PC-9 (cell line): ENCODE measurements at regions of chr16 and their contacts with region 1.

Region 1: DNA sequence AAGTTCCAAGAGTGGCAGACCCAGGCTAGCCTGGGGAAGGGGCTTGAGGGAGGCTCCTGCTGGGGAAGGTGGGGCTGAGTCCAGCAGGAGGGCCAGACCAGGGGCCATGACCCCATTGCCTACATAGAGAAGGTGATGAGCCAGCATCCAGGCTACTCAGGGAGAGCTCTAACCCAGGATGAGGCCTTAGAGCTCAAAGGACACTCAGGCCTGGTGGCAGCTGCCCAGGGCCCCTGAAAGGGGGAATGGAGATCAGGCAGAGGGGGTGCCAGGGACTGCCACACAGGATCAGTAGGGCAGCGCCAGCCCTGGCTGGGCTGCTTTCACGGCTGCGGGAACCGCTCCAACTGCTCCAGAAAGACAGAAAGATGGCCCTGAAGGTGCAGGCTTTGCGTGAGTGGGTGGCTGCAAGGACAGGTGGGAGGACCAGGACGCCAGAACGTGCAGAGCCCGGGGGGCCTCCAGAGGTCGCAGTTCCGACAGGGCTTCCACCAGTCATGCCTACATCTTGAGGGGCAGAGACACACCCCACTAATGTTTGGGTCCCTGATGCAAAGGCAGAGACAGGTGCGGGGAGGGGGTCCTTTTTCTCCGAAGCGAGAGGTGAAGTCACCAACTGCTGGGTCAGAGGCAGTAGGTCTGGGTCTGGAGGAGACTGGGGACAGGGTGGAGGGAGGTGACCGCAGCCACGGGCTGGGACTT is 898 bp upstream of the ATP6V0C start:
- DNase-seq: no peak
- H3K4me3 ChIP-seq: peak overlapping the region; percentile 80; the same call in 1 of the 2 replicates
- H3K27ac ChIP-seq: no peak overlapping the region
- H3K4me1 ChIP-seq: peaks cover 22% of the 10 kb centered on the region
- H3K27me3 ChIP-seq: no peaks in the 10 kb centered on the region
- CTCF ChIP-seq: no peak

Region 2: GRCh38 chr16:2236337-2237101 is 276.3 kb before region 1 on chr16 and contains the start of gene DNASE1L2:
- CTCF ChIA-PET with region 1: no interaction called
- POLR2A ChIA-PET with region 1: no interaction called
- intact Hi-C with region 1: no loop called
- DNase-seq: no peak
- H3K4me3 ChIP-seq: no peak within 1 kb of the TSS
- H3K27ac ChIP-seq: no peak within 1 kb of the TSS
- H3K4me1 ChIP-seq: no peaks in the 10 kb centered on the region
- H3K27me3 ChIP-seq: no peaks in the 10 kb centered on the region
- CTCF ChIP-seq: no peak
- total RNA-seq, gene DNASE1L2: 6.0 and 7.3 TPM in 2 replicates

Region 3: DNA sequence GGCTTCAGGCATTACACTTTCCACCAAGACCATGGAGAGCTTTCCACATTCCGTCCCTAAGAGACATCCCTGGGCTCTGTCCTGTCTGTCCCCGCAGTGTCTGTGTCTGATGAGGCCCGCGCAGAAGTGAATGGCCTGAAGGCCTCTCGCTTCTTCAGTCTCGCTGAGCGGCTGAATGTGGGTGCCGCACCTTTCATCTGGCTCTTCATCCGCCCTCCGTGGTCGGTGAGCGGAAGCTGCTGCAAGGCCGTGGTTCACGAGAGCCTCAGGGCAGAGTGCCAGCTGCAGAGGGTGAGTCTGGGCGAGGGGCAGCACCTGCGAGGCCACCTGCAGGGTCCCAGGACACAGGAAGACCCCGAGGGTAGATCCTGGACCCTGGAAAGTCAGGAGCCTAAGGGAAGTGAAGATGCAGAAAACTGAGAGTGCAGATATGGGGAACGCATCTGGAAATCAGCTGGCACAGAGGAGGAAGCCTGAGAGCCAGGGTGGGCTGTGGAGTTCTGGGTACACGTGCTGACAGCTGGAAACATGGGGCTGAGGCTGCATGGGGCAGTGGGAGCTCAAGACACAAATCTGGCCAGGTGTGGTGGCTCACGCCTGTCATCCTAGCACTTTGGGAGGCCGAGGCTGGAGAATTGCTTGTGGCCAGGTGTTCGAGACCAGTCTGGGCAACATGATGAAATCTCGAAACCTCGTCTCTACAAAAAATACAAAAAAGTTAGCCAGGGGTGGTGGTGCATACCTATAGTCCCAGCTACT is 75.6 kb before region 1 on chr16:
- CTCF ChIA-PET with region 1: no interaction called
- POLR2A ChIA-PET with region 1: interaction called, 11 read pairs
- intact Hi-C with region 1: no loop called
- DNase-seq: no peak
- H3K4me3 ChIP-seq: no peak overlapping the region
- H3K27ac ChIP-seq: no peak overlapping the region
- H3K4me1 ChIP-seq: no peaks in the 10 kb centered on the region
- H3K27me3 ChIP-seq: no peaks in the 10 kb centered on the region
- CTCF ChIP-seq: no peak

Region 4: DNA sequence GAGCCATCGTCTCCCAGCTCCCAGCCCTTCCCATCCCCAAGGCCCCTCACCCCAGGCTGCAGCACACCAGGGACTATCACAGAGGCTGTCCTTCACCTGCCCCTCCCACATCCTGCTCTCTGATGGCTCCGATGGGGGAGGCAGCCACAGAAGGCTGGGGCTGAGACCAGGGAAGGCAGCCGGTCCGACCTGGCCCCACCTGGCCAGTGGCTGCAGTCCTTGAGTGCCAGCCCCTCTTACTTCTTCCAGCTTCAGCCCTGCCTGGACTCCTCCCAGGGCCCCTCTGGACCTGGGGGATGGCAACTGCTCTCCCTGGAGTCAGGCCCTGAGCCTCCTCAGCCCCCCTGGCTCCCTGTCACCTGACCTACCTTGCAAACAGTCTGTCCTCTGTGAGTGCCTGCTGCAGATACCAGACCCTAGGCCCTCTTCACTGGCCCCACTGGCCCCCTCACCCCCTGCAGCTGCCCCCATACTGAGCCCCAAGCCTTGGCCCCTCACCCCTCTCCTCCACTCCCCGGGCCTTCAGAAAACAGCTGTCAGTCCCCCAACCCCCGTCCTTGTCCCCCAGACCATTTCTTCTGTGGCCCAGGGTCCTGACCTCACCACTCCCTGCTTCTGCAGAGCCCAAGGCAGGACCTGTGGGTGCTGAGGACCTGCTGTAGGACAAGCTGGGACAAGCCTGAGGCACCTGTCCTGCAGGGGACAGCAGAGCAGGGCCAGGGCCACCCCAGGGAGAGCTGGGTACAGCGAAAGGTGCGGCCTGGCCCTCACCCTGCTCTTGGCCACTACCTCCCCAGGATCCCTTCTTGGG is 227.0 kb after region 1 on chr16:
- CTCF ChIA-PET with region 1: no interaction called
- POLR2A ChIA-PET with region 1: no interaction called
- intact Hi-C with region 1: no loop called
- DNase-seq: no peak
- H3K4me3 ChIP-seq: no peak overlapping the region
- H3K27ac ChIP-seq: no peak overlapping the region
- H3K4me1 ChIP-seq: no peaks in the 10 kb centered on the region
- H3K27me3 ChIP-seq: no peaks in the 10 kb centered on the region
- CTCF ChIP-seq: no peak